GM18951 (cell line): ENCODE measurements at regions of chr6 and their contacts with region 1.

Region 1: GRCh38 chr6:6547110-6547879 is 41.2 kb upstream of the LY86 start:
- POLR2A ChIP-seq: no peak

Region 2: GRCh38 chr6:5471044-5471443 is 1076.3 kb before region 1 on chr6:
- in situ Hi-C with region 1: loop called (anchors 25 kb)
- POLR2A ChIP-seq: no peak

Region 3: GRCh38 chr6:6319952-6320811 is 227.1 kb before region 1 on chr6 and contains the start of gene F13A1:
- in situ Hi-C with region 1: loop called (anchors 10 kb)
- POLR2A ChIP-seq: peak; percentile 30

Region 4: GRCh38 chr6:6629402-6629801 is 82.1 kb after region 1 on chr6:
- in situ Hi-C with region 1: no loop called
- POLR2A ChIP-seq: no peak

Region 5: GRCh38 chr6:6696867-6697531 is 149.7 kb after region 1 on chr6:
- in situ Hi-C with region 1: no loop called
- POLR2A ChIP-seq: no peak